ENCODE measurements at regions of chr19 and their contacts with region 1.

Region 1: GRCh38 chr19:16118489-16119033 is 6.9 kb downstream of the RAB8A start:
- DNase-seq: no peak
- H3K4me3 ChIP-seq: no peak overlapping the region
- H3K27ac ChIP-seq: no peak overlapping the region
- H3K4me1 ChIP-seq: no peaks in the 10 kb centered on the region
- H3K27me3 ChIP-seq: no peaks in the 10 kb centered on the region
- CTCF ChIP-seq: no peak
- EP300 ChIP-seq: no peak
- POLR2A ChIP-seq: no peak

Region 2: DNA sequence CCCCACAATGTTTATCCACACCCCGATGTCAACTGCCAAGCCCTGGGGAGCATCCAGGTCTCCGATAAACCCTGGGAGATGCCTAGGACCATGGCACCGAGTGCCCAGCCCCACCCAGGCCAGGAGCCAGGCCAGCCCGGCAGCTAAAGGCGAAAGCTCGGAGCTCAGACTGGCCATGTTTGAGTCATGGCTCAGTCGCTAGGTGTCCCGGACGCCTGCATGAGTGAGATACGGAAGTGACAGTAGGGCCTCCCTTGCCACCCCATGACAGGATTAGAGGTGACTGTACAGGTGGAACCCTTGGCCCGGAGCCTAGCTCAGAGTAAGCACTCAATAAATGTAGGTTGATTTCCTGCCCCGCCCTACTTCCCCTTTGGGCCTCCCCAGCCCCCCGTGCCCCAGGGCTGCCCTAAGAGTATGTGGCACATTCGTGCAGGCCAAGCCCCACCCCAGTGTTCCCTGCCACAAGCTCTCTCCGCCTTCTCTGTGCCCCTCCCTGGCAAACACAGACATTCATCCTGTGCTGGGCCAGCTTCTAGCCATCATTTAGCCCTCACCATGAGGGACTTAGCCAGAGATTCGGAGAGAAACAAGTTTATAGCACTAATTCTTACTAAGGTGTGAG is 48.1 kb before region 1 on chr19:
- intact Hi-C with region 1: loop called in 3 of 4 experiments (anchors 5 to 10 kb)
- DNase-seq: peak in 2 of 5 donors; percentile 40 to 63
- H3K4me3 ChIP-seq: peak overlapping the region; percentile 65
- H3K27ac ChIP-seq: peak overlapping the region; percentile 52
- H3K4me1 ChIP-seq: no peaks in the 10 kb centered on the region
- H3K27me3 ChIP-seq: no peaks in the 10 kb centered on the region
- CTCF ChIP-seq: no peak
- EP300 ChIP-seq: no peak
- POLR2A ChIP-seq: no peak

Region 3: DNA sequence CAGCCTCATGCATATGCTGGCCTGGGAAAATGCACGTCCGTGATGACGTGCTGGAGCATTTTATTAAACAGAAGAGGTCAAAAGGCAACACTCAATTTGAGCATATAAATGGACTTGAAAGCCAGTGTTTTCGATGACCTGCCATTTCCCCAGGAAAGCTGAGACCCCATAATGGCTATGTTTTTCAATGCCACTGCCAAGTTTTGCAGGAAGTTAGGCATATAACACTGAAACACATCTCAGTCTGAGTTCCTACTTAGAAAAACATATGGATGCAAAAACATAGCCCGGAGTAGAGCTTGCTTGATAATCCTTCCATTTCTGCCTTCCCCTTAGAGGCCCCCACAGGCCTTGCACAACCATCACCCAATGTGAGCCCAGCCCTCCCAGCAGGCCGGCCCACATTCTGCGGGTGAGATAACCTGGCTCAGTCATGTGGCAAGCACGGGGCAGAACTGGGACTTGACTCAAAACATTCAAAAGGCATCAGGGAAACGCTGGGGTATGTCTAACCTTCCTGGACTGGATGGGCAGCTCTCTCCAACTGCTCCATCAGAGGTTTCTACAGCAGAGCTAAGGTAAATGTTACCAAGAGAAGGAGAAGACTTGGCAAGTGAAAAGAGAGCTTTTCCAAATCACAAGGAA is 328.3 kb after region 1 on chr19:
- intact Hi-C with region 1: no loop called
- DNase-seq: peak; percentile 69 to 84 (median 76)
- H3K4me3 ChIP-seq: no peak overlapping the region
- H3K27ac ChIP-seq: peak overlapping the region; percentile 11 to 41
- H3K4me1 ChIP-seq: peaks cover 15% of the 10 kb centered on the region
- H3K27me3 ChIP-seq: no peaks in the 10 kb centered on the region
- CTCF ChIP-seq: no peak
- EP300 ChIP-seq: no peak
- POLR2A ChIP-seq: no peak